ENCODE measurements at regions of chr16 and their contacts with region 1.

Region 1: DNA sequence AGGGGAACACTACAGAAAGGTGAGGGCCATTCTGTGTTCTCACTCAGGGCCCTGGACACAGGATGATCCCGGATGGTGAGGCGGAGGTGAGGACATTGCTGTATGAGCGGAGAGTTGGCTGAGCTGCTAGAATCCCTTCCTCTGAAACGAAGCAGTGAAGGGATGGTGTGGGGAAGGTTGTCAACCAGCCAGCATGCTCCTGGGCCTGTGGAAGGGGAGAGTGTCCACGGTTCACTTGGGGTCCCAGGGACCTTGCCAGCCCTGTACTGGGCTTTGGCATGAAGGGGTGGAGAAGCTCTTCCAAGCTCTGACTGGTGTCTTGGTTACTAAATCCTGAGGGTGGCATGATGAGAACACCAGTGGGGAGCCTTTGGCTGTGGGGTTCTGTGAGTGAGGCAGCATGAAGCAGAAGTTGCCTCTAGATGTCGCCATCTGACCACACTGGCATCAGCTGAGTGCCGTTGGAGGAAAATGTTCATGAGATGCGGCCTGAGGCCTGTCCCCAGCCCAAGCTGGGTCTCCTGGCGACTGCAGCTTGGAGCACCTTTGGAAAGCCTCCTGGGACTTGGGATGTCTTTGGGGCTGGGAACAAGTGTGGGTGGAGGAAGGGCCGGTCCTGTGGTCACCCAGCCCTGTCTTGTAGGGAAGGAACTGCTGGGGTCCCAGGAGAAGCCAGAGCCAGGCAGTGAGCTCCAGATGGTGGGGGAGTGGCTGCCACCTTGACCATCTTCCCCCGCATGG is 14.8 kb downstream of the PDP2 start:
- DNase-seq: peak; percentile 80
- H3K4me3 Mint-ChIP-seq: no peak overlapping the region
- H3K27ac Mint-ChIP-seq: peak overlapping the region; percentile 92
- H3K4me1 Mint-ChIP-seq: peaks cover 29% of the 10 kb centered on the region
- H3K27me3 Mint-ChIP-seq: no peaks in the 10 kb centered on the region
- CTCF ChIP-seq: peak; percentile 79

Region 2: DNA sequence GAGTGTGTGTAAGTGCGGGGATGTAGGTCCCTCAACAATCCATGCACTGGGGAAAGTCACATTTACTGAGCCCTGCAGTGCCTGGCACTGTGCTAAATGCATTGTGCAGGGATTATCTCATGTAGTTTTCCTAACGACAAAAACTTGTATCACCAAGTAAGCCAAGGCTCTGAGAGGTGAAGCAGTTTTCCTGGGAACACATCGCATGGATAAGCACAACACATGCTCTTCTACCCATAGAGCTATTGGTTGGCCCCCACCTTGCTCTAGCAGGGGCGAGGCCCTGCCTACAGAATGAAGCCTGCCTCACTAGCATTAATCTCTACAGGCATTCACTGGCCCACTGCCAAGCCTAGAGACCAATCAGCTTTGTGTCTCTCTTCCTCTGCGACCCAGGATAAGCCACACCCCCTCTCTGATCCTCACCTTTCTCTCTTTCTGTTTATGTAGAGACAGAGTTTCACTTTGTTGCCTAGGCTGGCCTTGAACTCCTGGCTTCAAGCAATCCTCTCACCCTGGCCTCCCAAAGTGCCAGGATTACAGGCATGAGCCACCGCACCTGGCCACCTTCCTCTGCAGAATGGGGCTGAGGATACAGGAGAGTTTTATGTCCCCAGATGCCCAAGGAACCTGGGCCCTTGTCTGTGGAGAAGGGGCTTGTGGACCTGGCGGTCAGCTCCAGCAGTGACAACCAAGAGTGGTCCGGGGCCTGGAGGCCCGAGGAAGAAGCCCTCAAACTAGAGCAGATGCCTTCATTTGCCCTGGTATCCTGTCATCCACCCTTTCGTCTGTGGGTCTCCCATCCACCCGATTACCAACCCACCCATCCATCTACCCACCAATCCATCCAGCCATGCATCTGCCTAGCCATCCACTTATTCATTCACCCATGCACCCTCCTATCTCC is 10.8 kb after region 1 on chr16:
- CTCF ChIA-PET with region 1: interaction called, 30 read pairs
- POLR2A ChIA-PET with region 1: interaction called, 7 read pairs
- intact Hi-C with region 1: no loop called
- DNase-seq: peak; percentile 61
- H3K4me3 Mint-ChIP-seq: no peak overlapping the region
- H3K27ac Mint-ChIP-seq: no peak overlapping the region
- H3K4me1 Mint-ChIP-seq: peaks cover 4% of the 10 kb centered on the region
- H3K27me3 Mint-ChIP-seq: no peaks in the 10 kb centered on the region
- CTCF ChIP-seq: no peak

Region 3: DNA sequence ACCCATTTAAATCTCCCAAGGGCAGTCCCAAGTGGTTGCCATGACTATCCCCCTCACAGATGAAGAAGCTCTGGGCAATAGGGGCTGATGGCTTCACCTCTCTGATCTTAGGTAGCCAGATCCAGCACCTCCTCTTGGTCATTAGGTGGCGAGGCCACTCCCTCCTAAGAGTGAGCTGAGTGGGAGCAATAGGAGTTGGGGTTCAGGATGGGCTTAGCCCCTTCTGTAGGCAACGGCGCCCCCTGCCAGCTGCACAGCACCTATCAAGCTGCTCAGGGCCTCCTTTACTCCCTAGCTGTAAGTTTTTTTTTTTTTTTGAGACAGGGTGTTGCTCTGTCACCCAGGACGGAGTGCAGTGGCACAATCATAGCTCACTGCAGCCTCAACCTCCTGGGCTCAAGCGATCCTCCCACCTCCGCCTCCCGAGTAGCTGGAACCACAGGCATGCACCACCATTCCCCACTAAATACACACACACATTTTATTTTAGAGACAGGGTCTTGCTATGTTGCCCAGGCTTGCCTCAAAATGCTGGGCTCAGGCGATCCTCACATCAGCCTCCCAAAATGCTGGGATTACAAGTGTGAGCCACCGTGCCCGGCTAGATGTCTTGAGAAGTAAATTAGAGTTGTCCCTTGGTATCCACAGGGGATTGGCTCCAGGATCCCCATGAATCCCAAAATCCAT is 33.7 kb after region 1 on chr16:
- CTCF ChIA-PET with region 1: interaction called, 62 read pairs
- POLR2A ChIA-PET with region 1: interaction called, 48 read pairs
- intact Hi-C with region 1: loop called (anchors 1 kb)
- DNase-seq: peak; percentile 52
- H3K4me3 Mint-ChIP-seq: no peak overlapping the region
- H3K27ac Mint-ChIP-seq: peak overlapping the region; percentile 69
- H3K4me1 Mint-ChIP-seq: peaks cover 46% of the 10 kb centered on the region
- H3K27me3 Mint-ChIP-seq: no peaks in the 10 kb centered on the region
- CTCF ChIP-seq: peak; percentile 30

Region 4: GRCh38 chr16:66947302-66948065 is 52.4 kb after region 1 on chr16:
- CTCF ChIA-PET with region 1: interaction called, 66 read pairs
- POLR2A ChIA-PET with region 1: interaction called, 20 read pairs
- intact Hi-C with region 1: loop called (anchors 1 kb)
- DNase-seq: peak; percentile 92
- H3K4me3 Mint-ChIP-seq: peak overlapping the region; percentile 68
- H3K27ac Mint-ChIP-seq: no peak overlapping the region
- H3K4me1 Mint-ChIP-seq: peaks cover 16% of the 10 kb centered on the region
- H3K27me3 Mint-ChIP-seq: no peaks in the 10 kb centered on the region
- CTCF ChIP-seq: peak; percentile 71

Region 5: DNA sequence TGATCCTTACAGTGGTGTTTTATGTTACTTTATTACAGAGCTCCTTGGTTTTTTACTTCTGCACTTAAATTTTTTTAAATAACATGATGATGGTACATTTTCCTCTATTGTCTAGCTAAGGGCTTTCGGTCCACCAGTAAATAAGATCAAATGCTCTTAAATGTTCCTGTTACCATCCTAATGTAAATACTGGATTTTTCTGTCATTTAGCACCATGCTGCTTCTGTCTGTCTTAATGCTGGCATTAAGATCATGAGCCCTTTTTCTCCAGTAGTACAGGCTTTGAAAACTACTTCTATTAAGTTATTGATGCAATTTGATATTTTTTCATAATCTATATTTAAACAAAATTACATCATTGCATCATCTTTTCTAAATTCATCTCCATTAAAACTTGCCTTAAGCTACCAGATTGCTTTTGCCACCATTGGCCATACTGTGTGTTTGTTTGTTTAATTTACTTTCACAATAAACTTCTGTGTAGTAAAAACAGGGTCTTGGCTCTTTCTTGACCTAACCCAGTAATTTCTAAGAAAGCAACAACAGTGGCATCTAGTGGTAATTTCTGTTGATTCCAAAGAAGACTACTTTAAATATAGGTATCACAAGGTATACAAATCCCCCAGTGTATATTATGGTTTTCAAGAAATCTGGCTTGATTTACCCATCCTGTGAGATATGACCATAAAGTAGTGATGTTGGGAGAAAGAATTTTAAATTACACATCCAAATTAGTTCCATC is 205.6 kb after region 1 on chr16:
- CTCF ChIA-PET with region 1: interaction called, 20 read pairs
- POLR2A ChIA-PET with region 1: interaction called, 5 read pairs
- intact Hi-C with region 1: no loop called
- DNase-seq: no peak
- H3K4me3 Mint-ChIP-seq: no peak overlapping the region
- H3K27ac Mint-ChIP-seq: no peak overlapping the region
- H3K4me1 Mint-ChIP-seq: peaks cover 4% of the 10 kb centered on the region
- H3K27me3 Mint-ChIP-seq: no peaks in the 10 kb centered on the region
- CTCF ChIP-seq: peak; percentile 24